ENCODE measurements at regions of chr7 and their contacts with region 1.

Region 1: GRCh38 chr7:129163875-129164544 is 19.5 kb downstream of the TSPAN33 start:
- DNase-seq: peak; percentile 37
- ATAC-seq: peak; percentile 66
- H3K4me3 Mint-ChIP-seq: no peak overlapping the region
- H3K27ac Mint-ChIP-seq: no peak overlapping the region
- H3K4me1 Mint-ChIP-seq: peaks cover 8% of the 10 kb centered on the region
- H3K27me3 Mint-ChIP-seq: no peaks in the 10 kb centered on the region
- CTCF ChIP-seq: peak; percentile 91

Region 2: DNA sequence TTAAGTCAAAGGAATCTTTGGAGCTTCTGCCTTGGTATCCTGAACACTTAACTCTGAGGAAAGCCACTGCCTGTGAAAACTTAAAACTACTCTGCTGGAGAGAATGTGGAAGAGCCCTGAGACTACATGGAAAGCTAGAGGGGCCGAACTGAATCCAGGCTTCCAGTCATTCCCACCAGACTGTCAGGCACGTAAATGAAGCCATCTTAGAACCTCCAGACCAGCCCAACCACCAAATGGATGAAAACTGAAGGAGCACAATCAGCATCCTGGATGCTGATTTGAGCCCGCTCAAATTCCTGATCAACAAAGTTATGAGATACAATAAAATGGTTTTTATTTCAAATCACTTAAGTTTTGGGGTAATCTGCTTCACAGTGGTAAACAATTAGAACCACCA is 139.9 kb before region 1 on chr7:
- CTCF ChIA-PET with region 1: no interaction called
- POLR2A ChIA-PET with region 1: no interaction called
- intact Hi-C with region 1: no loop called
- DNase-seq: no peak
- ATAC-seq: no peak
- H3K4me3 Mint-ChIP-seq: no peak overlapping the region
- H3K27ac Mint-ChIP-seq: no peak overlapping the region
- H3K4me1 Mint-ChIP-seq: peaks cover 35% of the 10 kb centered on the region
- H3K27me3 Mint-ChIP-seq: no peaks in the 10 kb centered on the region
- CTCF ChIP-seq: no peak

Region 3: DNA sequence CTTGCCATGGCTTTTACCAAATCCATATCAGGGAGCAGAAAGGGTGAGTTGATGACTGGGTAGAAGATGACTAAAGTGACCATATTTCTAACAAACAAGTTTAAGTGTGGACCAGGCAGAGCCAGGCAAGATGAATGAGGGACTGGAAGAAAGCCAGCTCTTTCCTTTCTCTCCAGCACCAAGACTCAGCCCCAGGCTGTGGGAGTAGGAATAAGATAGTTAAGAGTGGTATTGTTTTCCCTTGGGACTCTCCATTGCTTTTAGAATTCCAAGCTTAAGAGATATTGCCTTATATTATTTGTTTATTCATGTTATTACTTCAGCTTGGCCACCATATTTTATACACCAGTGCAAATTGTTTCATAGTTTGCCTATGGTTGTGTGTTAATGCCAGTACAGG is 48.3 kb before region 1 on chr7:
- CTCF ChIA-PET with region 1: interaction called, 14 read pairs
- POLR2A ChIA-PET with region 1: interaction called, 3 read pairs
- intact Hi-C with region 1: no loop called
- DNase-seq: no peak
- ATAC-seq: no peak
- H3K4me3 Mint-ChIP-seq: no peak overlapping the region
- H3K27ac Mint-ChIP-seq: no peak overlapping the region
- H3K4me1 Mint-ChIP-seq: peaks cover 3% of the 10 kb centered on the region
- H3K27me3 Mint-ChIP-seq: peaks cover 2% of the 10 kb centered on the region
- CTCF ChIP-seq: no peak

Region 4: DNA sequence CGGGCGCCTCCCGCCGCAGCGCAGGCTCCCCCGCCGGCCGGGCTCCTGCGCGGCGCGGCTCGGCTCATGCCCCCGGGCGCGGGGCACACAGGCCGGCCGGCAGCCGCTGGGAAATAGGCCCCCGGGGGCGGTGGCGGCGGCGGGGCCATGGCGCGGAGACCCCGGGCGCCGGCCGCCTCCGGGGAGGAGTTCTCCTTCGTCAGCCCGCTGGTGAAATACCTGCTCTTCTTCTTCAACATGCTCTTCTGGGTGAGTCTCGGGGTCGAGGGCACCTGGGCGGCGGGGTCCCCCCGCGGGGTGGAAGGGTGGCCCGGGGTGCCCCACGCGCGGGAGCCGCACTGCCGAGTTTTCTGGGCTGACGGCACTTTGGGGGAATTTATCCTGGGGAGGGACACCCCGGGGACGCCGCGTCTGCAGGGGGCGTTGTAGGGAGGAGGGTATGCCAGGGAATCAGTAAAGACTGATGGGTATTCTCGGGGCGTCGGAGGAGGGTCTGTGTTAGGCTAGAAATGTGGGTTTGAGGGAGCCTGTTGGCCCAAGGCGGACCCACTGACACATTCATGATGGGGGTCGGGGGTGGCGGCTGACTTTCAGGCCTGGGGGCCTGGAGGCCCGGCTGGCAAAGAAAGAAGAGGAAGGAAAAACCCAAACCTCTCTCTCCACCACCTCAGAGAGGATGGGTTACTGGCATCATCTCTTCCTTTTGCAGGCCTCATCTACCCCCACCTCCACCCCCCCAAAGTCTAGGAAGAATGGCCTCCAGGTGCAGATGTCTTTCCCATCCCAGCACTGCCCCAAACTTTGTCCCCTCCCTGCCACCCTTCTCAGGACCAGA is 19.0 kb before region 1 on chr7:
- CTCF ChIA-PET with region 1: interaction called, 26 read pairs
- POLR2A ChIA-PET with region 1: no interaction called
- intact Hi-C with region 1: no loop called
- DNase-seq: peak; percentile 37
- ATAC-seq: peak; percentile 62
- H3K4me3 Mint-ChIP-seq: peak overlapping the region; percentile 73
- H3K27ac Mint-ChIP-seq: no peak overlapping the region
- H3K4me1 Mint-ChIP-seq: peaks cover 14% of the 10 kb centered on the region
- H3K27me3 Mint-ChIP-seq: peaks cover 11% of the 10 kb centered on the region
- CTCF ChIP-seq: peak; percentile 49

Region 5: DNA sequence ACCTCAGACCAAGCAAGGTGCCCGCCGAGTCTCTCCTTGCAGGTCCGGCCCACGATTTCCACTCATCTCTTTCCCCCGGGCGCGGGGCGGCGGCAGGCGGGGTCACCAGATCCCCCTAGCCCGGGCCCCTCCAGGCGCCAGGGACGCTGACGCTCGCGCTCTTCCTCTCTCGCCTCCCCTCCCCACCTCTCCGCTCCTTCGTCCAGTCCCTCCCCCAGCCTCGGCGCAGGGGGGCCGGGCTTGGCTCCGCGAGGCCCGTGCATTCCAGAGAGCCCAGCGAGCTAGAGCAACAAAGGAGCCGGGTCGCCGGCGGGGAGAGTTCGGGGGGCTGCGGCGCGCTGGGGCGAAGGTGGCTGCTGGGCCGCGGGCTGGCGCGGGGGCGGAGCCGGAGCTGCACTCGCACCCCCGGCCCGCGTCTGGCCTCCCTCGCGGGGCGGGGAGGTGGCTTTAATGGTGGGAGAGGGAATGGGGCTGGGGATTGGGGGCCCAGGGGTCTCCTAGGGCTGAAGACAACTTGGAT is 24.4 kb after region 1 on chr7 and contains the start of gene SMO:
- CTCF ChIA-PET with region 1: interaction called, 30 read pairs
- POLR2A ChIA-PET with region 1: no interaction called
- intact Hi-C with region 1: no loop called
- DNase-seq: peak; percentile 19
- ATAC-seq: peak; percentile 70
- H3K4me3 Mint-ChIP-seq: peak within 1 kb of the TSS; percentile 62
- H3K27ac Mint-ChIP-seq: no peak within 1 kb of the TSS
- H3K4me1 Mint-ChIP-seq: peaks cover 5% of the 10 kb centered on the region
- H3K27me3 Mint-ChIP-seq: peaks cover 50% of the 10 kb centered on the region
- CTCF ChIP-seq: no peak
- total RNA-seq, gene SMO: 0.81 to 1.7 TPM

Region 6: GRCh38 chr7:129298268-129298893 is 134.4 kb after region 1 on chr7:
- CTCF ChIA-PET with region 1: interaction called, 13 read pairs
- POLR2A ChIA-PET with region 1: no interaction called
- intact Hi-C with region 1: no loop called
- DNase-seq: peak; percentile 79
- ATAC-seq: no peak
- H3K4me3 Mint-ChIP-seq: no peak overlapping the region
- H3K27ac Mint-ChIP-seq: no peak overlapping the region
- H3K4me1 Mint-ChIP-seq: no peaks in the 10 kb centered on the region
- H3K27me3 Mint-ChIP-seq: no peaks in the 10 kb centered on the region
- CTCF ChIP-seq: peak; percentile 82

Measured in activated CD8-positive, alpha-beta T cell treated with anti-CD3 and anti-CD28 coated beads for 36 hours (primary cell).